ENCODE measurements at regions of chr13 and their contacts with region 1.

Region 1: DNA sequence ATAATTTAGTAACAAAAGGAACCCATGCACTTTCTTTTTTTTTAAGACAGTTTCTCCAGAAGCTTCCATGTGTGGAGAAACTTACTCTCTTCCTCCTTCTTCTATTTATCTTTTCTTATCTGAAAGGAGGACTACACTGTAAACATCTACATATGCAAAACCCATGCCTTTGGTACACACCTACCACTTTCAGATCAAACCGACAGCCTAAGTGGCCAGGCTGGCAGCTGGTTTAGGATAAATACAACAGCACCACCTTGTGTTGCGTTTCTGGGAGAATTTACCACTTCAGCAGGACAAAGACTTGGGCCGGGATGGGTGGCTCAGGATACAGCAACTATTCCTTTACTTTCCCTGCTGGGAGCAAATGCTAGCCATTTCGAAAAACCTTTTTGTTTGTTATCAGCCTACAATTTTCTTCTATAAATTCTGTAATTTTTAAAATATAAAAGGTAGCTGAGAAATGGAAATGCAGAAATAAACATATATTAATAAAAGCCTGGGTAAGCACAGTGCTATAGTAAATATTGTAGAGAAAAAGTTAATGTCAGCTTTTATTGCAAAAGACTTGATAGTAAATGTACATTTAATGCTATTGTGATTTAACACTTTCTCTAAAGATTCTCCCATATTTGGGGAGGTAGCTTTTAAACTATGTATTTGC is 94.0 kb upstream of the RFC3 start:
- DNase-seq: peak; percentile 27 to 86
- ATAC-seq: peak; percentile 83 to 94 (median 88)
- H3K4me3 ChIP-seq: no peak overlapping the region
- H3K27ac ChIP-seq: peak overlapping the region in 7 of 10 donors; percentile 62 to 84 (median 77)
- H3K4me1 ChIP-seq: peaks cover 6 to 55% (median 36%) of the 10 kb centered on the region in 9 donors
- H3K27me3 ChIP-seq: no peaks in the 10 kb centered on the region
- CTCF ChIP-seq: peak; percentile 41 to 90 (median 78)

Region 2: DNA sequence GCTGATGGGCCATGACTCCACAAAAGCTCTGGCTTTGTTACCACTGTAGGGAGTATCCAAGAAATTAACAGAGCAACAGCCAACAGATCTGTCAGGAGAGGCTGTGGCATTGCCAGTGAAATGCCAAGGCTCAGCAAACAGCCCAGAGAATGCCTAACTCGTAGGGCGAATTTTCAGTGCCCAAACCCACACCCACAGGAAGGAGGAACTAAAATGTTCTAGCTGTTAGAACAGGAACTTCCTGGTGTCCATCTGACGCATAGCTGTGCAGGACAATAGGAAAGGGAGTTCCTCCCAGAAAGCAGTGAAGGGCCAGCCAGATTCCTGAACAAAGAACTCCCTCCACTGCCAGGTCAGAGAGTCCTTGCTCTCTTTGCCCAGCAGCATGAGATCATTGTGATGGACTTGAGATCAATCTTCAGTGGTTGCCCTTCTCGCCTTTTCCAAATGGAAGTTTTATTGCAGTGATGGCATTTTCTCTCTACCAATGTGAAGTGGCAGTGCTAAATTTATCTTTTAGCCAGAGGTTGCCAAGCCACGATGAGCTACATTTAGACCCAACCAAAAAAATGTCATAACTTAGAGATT is 214.2 kb before region 1 on chr13:
- intact Hi-C with region 1: no loop called
- DNase-seq: peak; percentile 13 to 62
- ATAC-seq: peak; percentile 79 to 94 (median 90)
- H3K4me3 ChIP-seq: peak overlapping the region in 1 of 10 donors; percentile 2
- H3K27ac ChIP-seq: peak overlapping the region; percentile 80 to 93 (median 87)
- H3K4me1 ChIP-seq: peaks cover 2 to 45% (median 31%) of the 10 kb centered on the region in 9 donors
- H3K27me3 ChIP-seq: no peaks in the 10 kb centered on the region
- CTCF ChIP-seq: peak in 2 of 9 donors; percentile 16 to 29

Region 3: DNA sequence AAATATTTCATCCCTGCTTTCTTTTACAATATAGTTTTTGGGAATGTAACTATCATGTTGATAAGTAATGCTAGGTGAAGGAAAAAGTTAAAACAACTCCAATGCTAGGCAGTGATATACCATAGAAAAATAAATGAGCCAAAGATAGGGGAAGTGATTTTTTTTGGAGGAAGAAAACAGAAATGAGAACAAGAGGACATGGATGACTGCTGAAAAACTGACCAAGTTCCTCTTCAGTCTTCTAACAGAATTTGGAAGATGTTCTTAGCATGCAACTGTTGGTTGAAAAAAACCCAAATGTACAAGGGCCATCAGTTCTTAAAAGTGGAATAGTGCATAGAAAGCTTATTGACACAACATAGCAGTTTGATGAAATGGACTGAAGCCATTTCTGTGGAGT is 175.8 kb before region 1 on chr13:
- intact Hi-C with region 1: loop called (anchors 2 to 10 kb)
- DNase-seq: no peak
- ATAC-seq: no peak
- H3K4me3 ChIP-seq: no peak overlapping the region
- H3K27ac ChIP-seq: peak overlapping the region in 1 of 10 donors; percentile 55
- H3K4me1 ChIP-seq: peaks cover 0 to 30% (median 13%) of the 10 kb centered on the region in 9 donors
- H3K27me3 ChIP-seq: no peaks in the 10 kb centered on the region
- CTCF ChIP-seq: no peak

Region 4: GRCh38 chr13:33554919-33555791 is 168.7 kb before region 1 on chr13:
- intact Hi-C with region 1: loop called in 2 of 10 experiments (anchors 5 kb)
- DNase-seq: no peak
- ATAC-seq: peak in 2 of 8 donors; percentile 31 to 51
- H3K4me3 ChIP-seq: no peak overlapping the region
- H3K27ac ChIP-seq: peak overlapping the region in 6 of 10 donors; percentile 8 to 63 (median 20)
- H3K4me1 ChIP-seq: peaks cover 0 to 18% (median 5%) of the 10 kb centered on the region in 9 donors
- H3K27me3 ChIP-seq: no peaks in the 10 kb centered on the region
- CTCF ChIP-seq: no peak

Region 5: GRCh38 chr13:33678906-33679657 is 44.8 kb before region 1 on chr13:
- intact Hi-C with region 1: loop called in 3 of 10 experiments (anchors 5 kb)
- DNase-seq: peak; percentile 36 to 75
- ATAC-seq: peak; percentile 53 to 81 (median 72)
- H3K4me3 ChIP-seq: peak overlapping the region in 5 of 10 donors; percentile 1 to 22 (median 10)
- H3K27ac ChIP-seq: peak overlapping the region in 9 of 10 donors; percentile 34 to 73 (median 61)
- H3K4me1 ChIP-seq: peaks cover 0 to 41% (median 30%) of the 10 kb centered on the region in 9 donors
- H3K27me3 ChIP-seq: no peaks in the 10 kb centered on the region
- CTCF ChIP-seq: no peak

Region 6: GRCh38 chr13:33761740-33762139 is 37.8 kb after region 1 on chr13:
- intact Hi-C with region 1: no loop called
- DNase-seq: no peak
- ATAC-seq: peak in 1 of 8 donors; percentile 55
- H3K4me3 ChIP-seq: no peak overlapping the region
- H3K27ac ChIP-seq: no peak overlapping the region
- H3K4me1 ChIP-seq: peaks cover 0 to 6% (median 0%) of the 10 kb centered on the region in 9 donors
- H3K27me3 ChIP-seq: no peaks in the 10 kb centered on the region
- CTCF ChIP-seq: peak in 3 of 9 donors; percentile 9 to 32 (median 32)